Esophagus muscularis mucosa (tissue), 4 donors: ENCODE measurements at regions of chr7 and their contacts with region 1.

Region 1: GRCh38 chr7:30478349-30479201 is at the start of gene NOD1:
- DNase-seq: no peak
- H3K4me3 ChIP-seq: peak within 1 kb of the TSS; percentile 70 to 82 (median 74)
- H3K27ac ChIP-seq: peak within 1 kb of the TSS; percentile 90 to 97 (median 94)
- H3K4me1 ChIP-seq: peaks cover 51 to 58% (median 54%) of the 10 kb centered on the region in 4 donors
- H3K27me3 ChIP-seq: no peaks in the 10 kb centered on the region
- CTCF ChIP-seq: peak in 1 of 3 experiments; percentile 23
- EP300 ChIP-seq: no peak
- POLR2A ChIP-seq: peak; percentile 79
- total RNA-seq, gene NOD1: 11.6 to 22.0 (median 13.0) TPM

Region 2: GRCh38 chr7:30284298-30285066 is 194.1 kb before region 1 on chr7 and contains the start of gene ZNRF2:
- intact Hi-C with region 1: loop called (anchors 10 kb)
- DNase-seq: peak; percentile 100
- H3K4me3 ChIP-seq: peak within 1 kb of the TSS; percentile 78 to 91 (median 84)
- H3K27ac ChIP-seq: peak within 1 kb of the TSS; percentile 96 to 100 (median 99)
- H3K4me1 ChIP-seq: peaks cover 20 to 40% (median 36%) of the 10 kb centered on the region in 4 donors
- H3K27me3 ChIP-seq: no peaks in the 10 kb centered on the region
- CTCF ChIP-seq: peak; percentile 44 to 63 (median 50)
- EP300 ChIP-seq: no peak
- POLR2A ChIP-seq: peak; percentile 68
- total RNA-seq, gene ZNRF2: 16.9 to 23.5 (median 20.2) TPM

Region 3: DNA sequence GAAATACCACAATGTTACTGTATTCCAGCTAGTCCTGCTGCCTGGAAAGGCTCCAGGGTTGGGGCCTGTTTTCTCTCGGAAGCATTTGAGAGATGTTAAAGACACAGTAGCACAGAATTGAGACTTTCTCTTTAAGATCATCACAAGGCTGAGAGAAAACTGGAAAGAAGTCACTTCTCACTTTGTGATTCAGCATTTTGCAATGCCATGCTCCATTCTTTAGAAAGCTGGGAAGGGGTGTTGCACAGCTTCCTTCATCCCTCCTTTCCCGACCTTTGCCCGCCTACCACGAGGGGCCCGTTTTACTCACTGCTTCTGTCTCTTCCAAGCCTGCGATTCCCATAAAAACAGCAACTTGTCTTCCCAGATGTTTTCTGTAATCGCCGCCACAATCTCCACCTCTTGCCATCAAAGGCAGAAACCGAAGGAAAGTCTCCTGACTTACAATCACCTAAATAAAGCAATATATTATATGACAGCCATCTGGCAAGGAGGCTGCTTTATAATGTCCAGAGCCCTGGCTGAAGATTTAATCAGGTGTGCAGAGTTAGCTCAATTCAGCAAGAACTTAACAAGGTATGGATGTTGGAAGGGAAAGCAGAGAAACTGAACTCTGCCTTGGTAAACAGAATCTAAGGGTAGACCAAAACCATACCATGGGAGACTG is 18.9 kb before region 1 on chr7:
- intact Hi-C with region 1: no loop called
- DNase-seq: no peak
- H3K4me3 ChIP-seq: peak overlapping the region in 3 of 4 donors; percentile 19 to 40 (median 25)
- H3K27ac ChIP-seq: peak overlapping the region; percentile 73 to 80 (median 79)
- H3K4me1 ChIP-seq: peaks cover 36 to 60% (median 56%) of the 10 kb centered on the region in 4 donors
- H3K27me3 ChIP-seq: no peaks in the 10 kb centered on the region
- CTCF ChIP-seq: no peak
- EP300 ChIP-seq: peak; percentile 90
- POLR2A ChIP-seq: no peak

Region 4: DNA sequence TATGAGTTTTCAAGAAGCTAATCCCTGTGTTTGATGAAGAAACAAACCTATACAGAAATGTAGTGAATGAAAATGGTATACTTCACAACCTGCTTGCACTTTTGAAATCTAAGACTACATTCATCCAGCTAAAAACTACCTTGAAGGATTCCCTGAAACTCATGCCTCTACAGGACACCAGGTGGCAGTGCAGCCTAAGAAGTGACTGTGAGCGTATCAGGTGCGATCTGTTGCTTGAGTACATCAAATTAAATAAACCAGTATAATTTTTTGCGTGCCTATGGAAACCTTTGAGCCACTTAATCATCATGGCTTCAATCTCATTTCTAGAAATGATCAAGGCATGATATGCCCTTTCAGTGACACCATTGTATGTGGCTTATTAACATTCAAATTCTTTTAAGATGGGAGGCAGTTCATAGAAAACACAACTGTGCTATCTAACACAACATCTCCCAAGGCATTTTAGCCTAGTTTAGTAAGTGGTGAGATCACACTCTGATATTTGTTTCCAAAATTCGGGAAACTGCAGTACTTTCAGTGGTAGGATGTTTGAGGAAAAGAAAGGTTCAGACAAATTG is 1265.8 kb after region 1 on chr7:
- intact Hi-C with region 1: no loop called
- DNase-seq: no peak
- H3K4me3 ChIP-seq: no peak overlapping the region
- H3K27ac ChIP-seq: no peak overlapping the region
- H3K4me1 ChIP-seq: no peaks in the 10 kb centered on the region
- H3K27me3 ChIP-seq: no peaks in the 10 kb centered on the region
- CTCF ChIP-seq: peak; percentile 84 to 93 (median 87)
- EP300 ChIP-seq: no peak
- POLR2A ChIP-seq: no peak